ENCODE measurements at regions of chr1 and their contacts with region 1.

Region 1: GRCh38 chr1:184954231-184954995 is 19.9 kb downstream of the NIBAN1 start:
- DNase-seq: no peak
- ATAC-seq: no peak
- H3K4me3 ChIP-seq: no peak overlapping the region
- H3K27ac ChIP-seq: peak overlapping the region; percentile 33
- H3K4me1 ChIP-seq: peaks cover 17% of the 10 kb centered on the region
- H3K27me3 ChIP-seq: no peaks in the 10 kb centered on the region
- CTCF ChIP-seq: peak; percentile 29; the same call in 1 of the 2 replicates

Region 2: DNA sequence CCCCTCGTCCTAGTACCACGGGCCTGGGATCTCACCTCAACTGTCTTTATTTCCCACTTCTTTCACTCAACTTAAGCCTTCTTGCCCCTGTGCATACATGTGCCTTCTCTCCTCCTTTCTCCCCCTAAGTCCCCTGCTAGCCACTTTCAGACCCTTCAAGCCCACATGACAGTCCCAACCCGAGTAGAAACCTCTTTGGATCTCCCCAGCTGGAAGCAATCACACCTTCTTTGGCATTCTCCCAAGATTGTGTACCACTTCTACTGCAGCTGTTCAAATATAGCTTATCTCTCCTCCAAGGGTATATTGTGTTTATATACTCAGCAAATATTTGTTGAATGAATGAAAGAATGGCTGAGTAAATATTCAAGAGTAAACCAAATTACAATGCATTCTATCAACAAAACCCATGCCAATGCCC is 48.9 kb before region 1 on chr1:
- CTCF ChIA-PET with region 1: no interaction called
- POLR2A ChIA-PET with region 1: no interaction called
- intact Hi-C with region 1: loop called (anchors 10 kb)
- DNase-seq: peak; percentile 67
- ATAC-seq: peak; percentile 87
- H3K4me3 ChIP-seq: no peak overlapping the region
- H3K27ac ChIP-seq: 0 out of 2 replicates have a peak overlapping the region, but pooled peaks have one; percentile 20
- H3K4me1 ChIP-seq: peaks cover 13% of the 10 kb centered on the region
- H3K27me3 ChIP-seq: no peaks in the 10 kb centered on the region
- CTCF ChIP-seq: no peak

Measured in PC-3 (cell line).